CD4-positive, alpha-beta memory T cell (primary cell): ENCODE measurements at regions of chr9 and their contacts with region 1.

Region 1: DNA sequence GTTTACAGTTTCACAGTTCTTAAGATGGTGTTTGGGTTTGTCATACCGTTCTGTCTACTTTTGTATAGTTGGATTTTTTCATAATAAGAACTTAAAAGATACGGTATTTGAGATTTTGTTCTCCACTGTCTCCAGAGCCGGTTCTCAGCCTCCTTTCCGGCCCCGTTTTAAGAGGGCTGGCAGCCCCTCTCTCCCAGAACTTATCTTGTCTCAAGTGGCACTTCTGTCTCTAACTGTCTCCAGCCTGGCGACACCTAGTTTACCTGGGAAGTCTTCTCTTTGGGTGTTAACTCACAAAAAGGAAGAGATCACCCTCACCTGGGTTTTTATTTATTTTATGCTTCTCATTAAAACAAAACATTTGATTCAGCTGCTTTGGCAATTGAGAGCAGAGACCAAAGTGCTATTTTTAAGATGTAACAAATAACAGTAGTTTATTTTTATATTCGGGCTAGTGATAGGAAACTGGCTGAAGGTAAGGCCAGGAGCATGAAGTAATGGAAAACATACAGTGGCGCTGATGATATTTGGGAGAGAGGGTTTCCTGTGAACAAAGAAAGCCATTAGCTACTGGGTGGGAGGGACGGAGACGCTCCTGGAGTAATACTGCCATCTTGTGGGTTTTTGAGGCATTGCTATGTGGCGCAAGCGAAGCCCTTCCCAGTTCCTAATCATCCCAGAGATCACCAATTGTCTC is 48.3 kb downstream of the ACER2 start:
- DNase-seq: peak; percentile 58 to 67 (median 64)
- H3K4me3 ChIP-seq: no peak overlapping the region
- H3K4me3 Mint-ChIP-seq: peak overlapping the region in 5 of 8 donors; percentile 40 to 60 (median 47)
- H3K27ac ChIP-seq: no peak overlapping the region
- H3K27ac Mint-ChIP-seq: peak overlapping the region in 1 of 7 donors; percentile 11
- H3K4me1 ChIP-seq: peaks cover 6% of the 10 kb centered on the region
- H3K4me1 Mint-ChIP-seq: peaks cover 5 to 9% (median 6%) of the 10 kb centered on the region in 4 donors
- H3K27me3 ChIP-seq: no peaks in the 10 kb centered on the region
- H3K27me3 Mint-ChIP-seq: peaks cover 0 to 1% of the 10 kb centered on the region in 2 donors

Region 2: DNA sequence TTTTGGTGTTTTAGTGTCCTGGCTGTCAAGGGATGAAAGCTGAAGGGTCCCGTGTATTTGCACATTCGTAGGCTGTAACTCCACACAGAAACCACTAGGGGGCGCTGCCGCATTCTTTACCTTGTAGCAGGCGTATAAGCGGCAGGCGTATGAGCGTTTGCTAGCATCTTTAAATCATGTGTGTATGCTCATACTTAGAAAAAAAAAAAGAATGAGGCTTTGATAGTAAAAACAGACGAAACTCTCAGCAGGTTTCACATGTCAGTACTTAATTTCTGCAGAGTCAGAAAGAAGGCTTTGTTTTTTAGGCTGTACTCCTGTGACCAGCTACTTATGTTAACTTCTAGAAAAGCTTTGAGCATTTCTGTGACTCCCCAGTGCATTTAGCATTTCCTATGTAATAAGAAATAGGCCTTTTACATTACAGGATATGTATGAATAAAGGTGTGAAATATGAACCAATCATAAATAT is 1202.0 kb before region 1 on chr9:
- CTCF ChIA-PET with region 1: interaction called, 36 read pairs
- POLR2A ChIA-PET with region 1: no interaction called
- intact Hi-C with region 1: no loop called
- DNase-seq: peak; percentile 42 to 59 (median 56)
- H3K4me3 ChIP-seq: no peak overlapping the region
- H3K4me3 Mint-ChIP-seq: no peak overlapping the region
- H3K27ac ChIP-seq: no peak overlapping the region
- H3K27ac Mint-ChIP-seq: no peak overlapping the region
- H3K4me1 ChIP-seq: no peaks in the 10 kb centered on the region
- H3K4me1 Mint-ChIP-seq: peaks cover 0 to 4% (median 2%) of the 10 kb centered on the region in 4 donors
- H3K27me3 ChIP-seq: no peaks in the 10 kb centered on the region
- H3K27me3 Mint-ChIP-seq: peaks cover 8% of the 10 kb centered on the region in 2 donors

Region 3: GRCh38 chr9:19048966-19049916 is 407.9 kb before region 1 on chr9 and contains the start of gene RRAGA:
- CTCF ChIA-PET with region 1: interaction called, 13 read pairs
- POLR2A ChIA-PET with region 1: interaction called, 9 read pairs
- intact Hi-C with region 1: loop called (anchors 1 kb)
- DNase-seq: peak; percentile 94 to 96 (median 95)
- H3K4me3 ChIP-seq: peak within 1 kb of the TSS; percentile 84 to 96
- H3K4me3 Mint-ChIP-seq: peak within 1 kb of the TSS; percentile 91 to 99 (median 96)
- H3K27ac ChIP-seq: peak within 1 kb of the TSS; percentile 87
- H3K27ac Mint-ChIP-seq: peak within 1 kb of the TSS; percentile 96 to 100 (median 99)
- H3K4me1 ChIP-seq: peaks cover 39% of the 10 kb centered on the region
- H3K4me1 Mint-ChIP-seq: peaks cover 21 to 56% (median 40%) of the 10 kb centered on the region in 4 donors
- H3K27me3 ChIP-seq: no peaks in the 10 kb centered on the region
- H3K27me3 Mint-ChIP-seq: no peaks in the 10 kb centered on the region
- total RNA-seq, gene RRAGA: 57.4 to 58.0 TPM

Region 4: DNA sequence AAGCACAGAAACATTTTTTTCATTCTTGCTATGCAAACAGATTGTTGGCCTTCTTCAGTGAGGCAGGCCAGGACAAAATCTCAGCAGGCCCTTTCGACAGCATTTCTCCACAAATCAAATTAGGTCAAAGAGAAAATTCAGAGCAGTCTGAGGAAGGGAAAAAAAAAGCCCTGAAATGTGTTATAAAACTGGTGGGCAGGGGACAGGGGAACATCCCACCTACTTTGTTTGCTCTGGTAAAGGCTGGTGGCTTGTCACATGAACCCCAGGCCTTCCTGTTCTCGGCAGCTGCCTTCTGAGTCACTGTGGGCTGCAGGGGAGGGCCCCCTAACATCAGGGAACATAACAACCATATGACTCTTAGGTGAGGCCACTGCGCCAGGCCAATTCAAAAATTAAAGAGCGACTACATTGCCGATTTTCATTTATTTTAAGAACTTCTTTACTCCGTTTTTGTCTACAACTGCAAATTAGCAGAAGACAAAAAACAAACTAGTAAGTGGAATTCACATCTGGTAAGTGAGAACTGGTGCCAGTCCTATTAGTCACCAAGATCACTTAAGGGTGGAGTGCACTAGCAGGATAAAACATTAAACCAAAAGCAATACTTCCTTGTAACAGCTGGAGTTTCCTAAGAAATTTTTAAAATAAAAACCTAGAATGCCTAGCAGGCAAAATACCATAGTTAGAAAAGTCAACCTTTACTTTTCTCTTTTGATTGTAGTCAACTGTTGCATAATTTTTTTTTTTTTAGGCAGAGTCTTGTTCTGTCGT is 272.8 kb before region 1 on chr9:
- CTCF ChIA-PET with region 1: interaction called, 10 read pairs
- POLR2A ChIA-PET with region 1: no interaction called
- intact Hi-C with region 1: no loop called
- DNase-seq: peak; percentile 57 to 90 (median 73)
- H3K4me3 ChIP-seq: no peak overlapping the region
- H3K4me3 Mint-ChIP-seq: peak overlapping the region in 7 of 8 donors; percentile 26 to 73 (median 51)
- H3K27ac ChIP-seq: peak overlapping the region; percentile 60
- H3K27ac Mint-ChIP-seq: peak overlapping the region; percentile 89 to 97 (median 95)
- H3K4me1 ChIP-seq: peaks cover 22% of the 10 kb centered on the region
- H3K4me1 Mint-ChIP-seq: peaks cover 9 to 20% (median 15%) of the 10 kb centered on the region in 4 donors
- H3K27me3 ChIP-seq: no peaks in the 10 kb centered on the region
- H3K27me3 Mint-ChIP-seq: no peaks in the 10 kb centered on the region

Region 5: GRCh38 chr9:19320495-19320894 is 136.6 kb before region 1 on chr9:
- CTCF ChIA-PET with region 1: interaction called, 4 read pairs
- POLR2A ChIA-PET with region 1: no interaction called
- intact Hi-C with region 1: loop called (anchors 10 kb)
- DNase-seq: no peak
- H3K4me3 ChIP-seq: no peak overlapping the region
- H3K4me3 Mint-ChIP-seq: no peak overlapping the region
- H3K27ac ChIP-seq: no peak overlapping the region
- H3K27ac Mint-ChIP-seq: no peak overlapping the region
- H3K4me1 ChIP-seq: no peaks in the 10 kb centered on the region
- H3K4me1 Mint-ChIP-seq: peaks cover 0 to 15% (median 7%) of the 10 kb centered on the region in 4 donors
- H3K27me3 ChIP-seq: no peaks in the 10 kb centered on the region
- H3K27me3 Mint-ChIP-seq: no peaks in the 10 kb centered on the region

Region 6: DNA sequence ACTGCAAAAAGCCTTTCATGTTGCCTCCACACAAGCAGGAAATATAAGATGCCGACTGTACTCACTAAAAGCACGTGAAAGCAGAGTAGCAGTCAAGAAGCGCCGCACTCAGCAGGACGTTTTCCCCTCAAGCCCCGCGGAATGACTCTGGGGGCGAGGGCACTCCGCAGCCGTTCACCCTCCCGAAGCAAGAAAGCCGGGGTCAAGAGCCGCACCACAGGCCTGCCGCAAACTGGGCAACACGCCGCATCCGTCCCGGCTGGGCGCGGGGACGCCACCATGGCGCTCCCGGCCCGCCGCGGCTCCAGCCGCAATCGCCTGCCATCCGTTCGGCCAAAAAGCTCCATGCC is 77.5 kb before region 1 on chr9:
- CTCF ChIA-PET with region 1: interaction called, 3 read pairs
- POLR2A ChIA-PET with region 1: interaction called, 5 read pairs
- intact Hi-C with region 1: loop called (anchors 1 kb)
- DNase-seq: peak in 1 of 5 donors; percentile 63
- H3K4me3 ChIP-seq: peak overlapping the region; percentile 64 to 71
- H3K4me3 Mint-ChIP-seq: peak overlapping the region; percentile 97 to 99 (median 98)
- H3K27ac ChIP-seq: peak overlapping the region; percentile 83
- H3K27ac Mint-ChIP-seq: peak overlapping the region; percentile 96 to 100 (median 99)
- H3K4me1 ChIP-seq: peaks cover 36% of the 10 kb centered on the region
- H3K4me1 Mint-ChIP-seq: peaks cover 36 to 44% (median 40%) of the 10 kb centered on the region in 4 donors
- H3K27me3 ChIP-seq: no peaks in the 10 kb centered on the region
- H3K27me3 Mint-ChIP-seq: no peaks in the 10 kb centered on the region

Region 7: DNA sequence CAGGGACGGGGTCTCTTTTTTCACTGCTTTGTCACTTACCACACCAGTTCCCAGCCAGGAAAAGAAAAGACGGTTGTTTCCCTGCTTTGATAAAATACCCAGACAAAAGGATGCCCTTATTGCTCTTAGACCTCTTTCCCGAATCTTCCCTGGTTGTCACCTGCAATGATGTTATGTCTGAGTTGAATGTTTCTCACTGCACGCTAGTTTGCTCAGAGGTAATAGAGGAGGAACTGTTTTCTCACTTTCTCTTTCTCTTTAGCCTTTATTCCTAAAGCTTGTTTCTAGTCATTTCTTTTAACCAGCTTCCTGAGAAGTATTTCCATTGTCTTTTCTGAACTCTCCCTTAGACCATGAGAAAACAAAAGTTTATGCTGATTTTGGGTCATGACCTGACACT is 15.4 kb before region 1 on chr9:
- CTCF ChIA-PET with region 1: interaction called, 13 read pairs
- POLR2A ChIA-PET with region 1: no interaction called
- intact Hi-C with region 1: no loop called
- DNase-seq: peak in 3 of 5 donors; percentile 8 to 25 (median 11)
- H3K4me3 ChIP-seq: no peak overlapping the region
- H3K4me3 Mint-ChIP-seq: peak overlapping the region; percentile 22 to 85 (median 76)
- H3K27ac ChIP-seq: peak overlapping the region; percentile 32
- H3K27ac Mint-ChIP-seq: peak overlapping the region in 6 of 7 donors; percentile 6 to 92 (median 74)
- H3K4me1 ChIP-seq: peaks cover 8% of the 10 kb centered on the region
- H3K4me1 Mint-ChIP-seq: peaks cover 9 to 15% (median 13%) of the 10 kb centered on the region in 4 donors
- H3K27me3 ChIP-seq: no peaks in the 10 kb centered on the region
- H3K27me3 Mint-ChIP-seq: no peaks in the 10 kb centered on the region